ENCODE measurements at regions of chr5 and their contacts with region 1.

Region 1: DNA sequence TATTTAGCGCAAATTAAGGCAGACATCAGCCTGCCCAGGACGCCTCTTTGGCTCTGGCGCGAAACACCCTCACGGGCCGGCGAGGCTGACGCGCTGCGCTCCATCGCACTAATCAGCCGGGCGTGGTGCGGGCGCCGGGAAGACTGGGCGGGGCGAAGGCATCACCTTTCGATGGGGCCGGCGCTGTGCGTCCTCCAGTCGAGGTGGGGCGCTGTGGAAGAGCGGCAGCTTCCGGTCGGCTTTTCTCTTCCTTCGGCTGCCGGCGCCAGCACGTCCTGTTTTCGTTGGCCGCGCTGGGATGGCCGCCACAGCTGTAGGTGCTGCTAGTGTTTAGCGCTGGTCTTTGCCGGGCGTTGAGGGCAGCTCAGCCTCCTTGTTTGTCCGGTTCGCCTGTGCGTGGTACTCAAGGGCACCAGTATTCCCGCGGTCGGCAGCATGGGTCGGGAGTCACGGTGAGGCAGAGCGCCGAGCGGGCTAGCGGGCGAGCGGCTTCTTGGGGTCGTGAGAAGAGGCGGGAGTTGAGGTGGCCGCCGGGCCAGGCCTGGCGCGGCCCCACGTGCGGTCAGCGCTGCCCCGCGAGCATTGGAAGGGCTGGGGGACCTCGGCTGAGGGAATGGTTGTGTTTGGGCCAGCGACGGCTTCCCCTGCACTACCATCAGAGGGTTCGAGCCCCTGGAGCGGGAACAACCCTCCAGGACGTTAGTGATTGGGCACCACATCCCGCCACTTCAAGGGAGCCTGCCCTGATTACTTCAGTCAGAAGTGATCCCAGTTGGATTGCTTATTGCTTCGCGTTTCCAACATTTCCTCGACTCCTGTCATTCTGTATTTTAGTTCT is at the start of gene DDX46:
- DNase-seq: peak; percentile 87 to 95 (median 94)
- ATAC-seq: peak; percentile 99
- H3K4me3 ChIP-seq: peak within 1 kb of the TSS; percentile 85 to 88
- H3K4me3 Mint-ChIP-seq: peak within 1 kb of the TSS; percentile 99
- H3K27ac ChIP-seq: peak within 1 kb of the TSS; percentile 76 to 78
- H3K27ac Mint-ChIP-seq: peak within 1 kb of the TSS; percentile 97
- H3K4me1 ChIP-seq: peaks cover 18% of the 10 kb centered on the region
- H3K4me1 Mint-ChIP-seq: peaks cover 36% of the 10 kb centered on the region
- H3K27me3 ChIP-seq: no peaks in the 10 kb centered on the region
- H3K27me3 Mint-ChIP-seq: no peaks in the 10 kb centered on the region
- CTCF ChIP-seq: peak; percentile 75
- total RNA-seq, gene DDX46: 35.1 to 40.4 TPM

Region 2: DNA sequence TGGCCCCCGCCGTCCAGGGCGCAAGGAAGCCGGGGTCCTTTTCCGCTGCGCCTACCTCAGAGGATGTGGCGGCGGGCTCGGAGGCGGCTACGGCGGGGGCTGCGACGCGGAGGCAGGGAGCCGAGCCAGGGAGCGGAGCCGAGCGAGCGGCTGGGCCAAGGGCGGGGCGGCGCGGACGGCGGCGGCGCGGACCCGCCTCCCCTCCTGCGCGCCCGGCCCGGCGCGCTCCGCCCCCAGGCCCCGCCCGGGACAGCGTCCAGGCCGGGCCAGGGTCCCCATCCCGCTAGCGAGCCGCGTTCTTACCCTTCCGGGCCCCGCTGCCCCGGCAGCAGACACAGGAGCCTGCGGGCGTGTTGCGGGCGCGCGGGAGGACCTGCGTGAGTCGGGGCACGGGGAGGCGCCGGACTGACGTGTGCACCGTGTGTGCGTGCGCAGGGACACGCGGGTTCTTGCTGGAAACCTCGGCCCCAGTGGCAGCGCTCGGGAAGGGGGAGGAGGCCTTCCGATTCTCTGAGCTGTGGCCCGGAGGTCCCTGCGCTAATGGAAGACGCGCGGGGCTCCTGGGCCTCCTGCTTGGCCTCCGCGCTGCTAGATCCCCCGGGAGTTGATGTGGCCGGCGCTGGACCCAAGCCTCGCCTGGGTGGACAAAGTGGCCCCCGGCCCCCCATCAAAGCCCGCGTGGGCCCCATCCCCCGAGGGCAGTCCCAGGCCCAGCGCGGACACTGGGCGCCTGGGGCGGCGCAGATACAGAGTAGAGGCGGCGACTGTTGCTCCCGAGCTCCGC is 753.9 kb before region 1 on chr5 and contains the start of gene VDAC1:
- CTCF ChIA-PET with region 1: no interaction called
- POLR2A ChIA-PET with region 1: no interaction called
- intact Hi-C with region 1: loop called in 1 of 2 experiments (anchors 10 kb)
- DNase-seq: peak; percentile 68 to 96 (median 86)
- ATAC-seq: peak; percentile 80
- H3K4me3 ChIP-seq: peak within 1 kb of the TSS; percentile 68 to 81
- H3K4me3 Mint-ChIP-seq: peak within 1 kb of the TSS; percentile 95
- H3K27ac ChIP-seq: peak within 1 kb of the TSS; percentile 81 to 98
- H3K27ac Mint-ChIP-seq: peak within 1 kb of the TSS; percentile 97
- H3K4me1 ChIP-seq: peaks cover 30% of the 10 kb centered on the region
- H3K4me1 Mint-ChIP-seq: peaks cover 43% of the 10 kb centered on the region
- H3K27me3 ChIP-seq: no peaks in the 10 kb centered on the region
- H3K27me3 Mint-ChIP-seq: no peaks in the 10 kb centered on the region
- CTCF ChIP-seq: no peak
- total RNA-seq, gene VDAC1: 68.1 to 71.1 TPM

Region 3: DNA sequence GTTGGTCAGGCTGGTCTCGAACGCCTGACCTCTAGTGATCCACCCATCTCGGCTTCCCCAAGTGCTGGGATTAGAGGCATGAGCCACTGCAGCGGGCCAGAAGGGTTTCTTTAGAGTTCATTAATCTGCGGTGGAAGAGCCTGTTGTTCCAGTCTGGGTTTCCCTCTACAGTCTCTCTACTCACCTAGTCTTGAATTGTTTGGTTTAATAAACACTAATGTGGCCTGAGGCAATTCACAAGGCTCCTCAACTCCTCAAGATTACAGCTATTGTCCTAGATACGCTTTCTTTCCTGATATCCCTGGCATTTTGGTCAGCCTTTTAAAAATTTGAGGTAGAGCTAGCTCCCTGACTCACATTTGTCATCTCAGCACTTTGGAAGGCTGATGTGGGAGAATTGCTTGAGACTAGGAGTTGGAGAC is 121.6 kb before region 1 on chr5:
- CTCF ChIA-PET with region 1: no interaction called
- POLR2A ChIA-PET with region 1: no interaction called
- intact Hi-C with region 1: loop called (anchors 1 kb)
- DNase-seq: no peak
- ATAC-seq: no peak
- H3K4me3 ChIP-seq: no peak overlapping the region
- H3K4me3 Mint-ChIP-seq: no peak overlapping the region
- H3K27ac ChIP-seq: no peak overlapping the region
- H3K27ac Mint-ChIP-seq: no peak overlapping the region
- H3K4me1 ChIP-seq: no peaks in the 10 kb centered on the region
- H3K4me1 Mint-ChIP-seq: peaks cover under 1% of the 10 kb centered on the region
- H3K27me3 ChIP-seq: no peaks in the 10 kb centered on the region
- H3K27me3 Mint-ChIP-seq: no peaks in the 10 kb centered on the region
- CTCF ChIP-seq: no peak

Region 4: GRCh38 chr5:134738133-134738962 is 20.4 kb before region 1 on chr5 and contains the start of gene CAMLG:
- CTCF ChIA-PET with region 1: interaction called, 31 read pairs
- POLR2A ChIA-PET with region 1: interaction called, 43 read pairs
- intact Hi-C with region 1: loop called (anchors 1 kb)
- DNase-seq: peak; percentile 94 to 99 (median 97)
- ATAC-seq: peak; percentile 97
- H3K4me3 ChIP-seq: peak within 1 kb of the TSS; percentile 89 to 91
- H3K4me3 Mint-ChIP-seq: peak within 1 kb of the TSS; percentile 86
- H3K27ac ChIP-seq: peak within 1 kb of the TSS; percentile 79 to 92
- H3K27ac Mint-ChIP-seq: peak within 1 kb of the TSS; percentile 95
- H3K4me1 ChIP-seq: peaks cover 20% of the 10 kb centered on the region
- H3K4me1 Mint-ChIP-seq: peaks cover 35% of the 10 kb centered on the region
- H3K27me3 ChIP-seq: no peaks in the 10 kb centered on the region
- H3K27me3 Mint-ChIP-seq: no peaks in the 10 kb centered on the region
- CTCF ChIP-seq: peak; percentile 81
- total RNA-seq, gene CAMLG: 52.3 to 56.2 TPM

Region 5: GRCh38 chr5:134873987-134874830 is 115.5 kb after region 1 on chr5 and contains the start of gene TXNDC15:
- CTCF ChIA-PET with region 1: no interaction called
- POLR2A ChIA-PET with region 1: interaction called, 3 read pairs
- intact Hi-C with region 1: loop called in 1 of 2 experiments (anchors 1 kb)
- DNase-seq: peak; percentile 61 to 91 (median 80)
- ATAC-seq: peak; percentile 92
- H3K4me3 ChIP-seq: peak within 1 kb of the TSS; percentile 59 to 92
- H3K4me3 Mint-ChIP-seq: peak within 1 kb of the TSS; percentile 92
- H3K27ac ChIP-seq: peak within 1 kb of the TSS; percentile 67 to 96
- H3K27ac Mint-ChIP-seq: peak within 1 kb of the TSS; percentile 94
- H3K4me1 ChIP-seq: peaks cover 36% of the 10 kb centered on the region
- H3K4me1 Mint-ChIP-seq: peaks cover 40% of the 10 kb centered on the region
- H3K27me3 ChIP-seq: no peaks in the 10 kb centered on the region
- H3K27me3 Mint-ChIP-seq: no peaks in the 10 kb centered on the region
- CTCF ChIP-seq: no peak
- total RNA-seq, gene TXNDC15: 19.8 to 21.0 TPM

Region 6: GRCh38 chr5:134887593-134888159 is 129.0 kb after region 1 on chr5:
- CTCF ChIA-PET with region 1: no interaction called
- POLR2A ChIA-PET with region 1: no interaction called
- intact Hi-C with region 1: no loop called
- DNase-seq: no peak
- ATAC-seq: no peak
- H3K4me3 ChIP-seq: no peak overlapping the region
- H3K4me3 Mint-ChIP-seq: no peak overlapping the region
- H3K27ac ChIP-seq: no peak overlapping the region
- H3K27ac Mint-ChIP-seq: no peak overlapping the region
- H3K4me1 ChIP-seq: peaks cover 7% of the 10 kb centered on the region
- H3K4me1 Mint-ChIP-seq: peaks cover 17% of the 10 kb centered on the region
- H3K27me3 ChIP-seq: no peaks in the 10 kb centered on the region
- H3K27me3 Mint-ChIP-seq: no peaks in the 10 kb centered on the region
- CTCF ChIP-seq: no peak

Region 7: DNA sequence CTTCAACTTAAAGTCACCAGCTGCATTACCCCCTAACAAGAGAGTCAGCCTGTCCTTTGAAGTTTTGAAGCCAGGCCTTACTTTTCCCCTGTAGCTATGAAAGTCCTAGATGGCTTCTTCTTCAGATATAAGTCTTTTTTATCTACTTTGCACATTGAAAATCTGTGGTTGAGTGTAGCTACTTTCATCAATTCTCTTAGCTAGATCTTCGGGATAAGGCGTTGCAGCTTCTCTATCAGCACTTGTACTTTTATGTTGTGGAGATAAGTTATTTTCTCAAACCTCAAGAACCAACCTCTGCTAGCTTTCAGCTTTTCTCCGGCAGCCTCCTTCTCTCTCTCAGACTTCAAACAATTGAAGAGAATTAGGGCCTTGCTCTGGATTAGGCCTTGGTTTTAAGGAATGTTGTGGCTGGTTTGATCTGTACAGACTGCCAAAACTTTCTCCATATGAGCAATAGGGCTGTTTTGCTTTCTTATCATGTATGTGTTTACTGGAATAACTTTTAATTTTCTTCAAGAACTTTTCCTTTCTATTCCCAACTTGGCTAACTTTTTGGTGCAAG is 230.6 kb after region 1 on chr5:
- CTCF ChIA-PET with region 1: no interaction called
- POLR2A ChIA-PET with region 1: no interaction called
- intact Hi-C with region 1: no loop called
- DNase-seq: no peak
- ATAC-seq: no peak
- H3K4me3 ChIP-seq: no peak overlapping the region
- H3K4me3 Mint-ChIP-seq: no peak overlapping the region
- H3K27ac ChIP-seq: no peak overlapping the region
- H3K27ac Mint-ChIP-seq: no peak overlapping the region
- H3K4me1 ChIP-seq: no peaks in the 10 kb centered on the region
- H3K4me1 Mint-ChIP-seq: no peaks in the 10 kb centered on the region
- H3K27me3 ChIP-seq: no peaks in the 10 kb centered on the region
- H3K27me3 Mint-ChIP-seq: peaks cover 6% of the 10 kb centered on the region
- CTCF ChIP-seq: no peak

Measured in CD8-positive, alpha-beta T cell (primary cell).